Psoas muscle (tissue), 8 donors: ENCODE measurements at regions of chr4 and their contacts with region 1.

Region 1: GRCh38 chr4:184168406-184169019 is 49.2 kb downstream of the ENPP6 start:
- DNase-seq: peak; percentile 71 to 85
- ATAC-seq: peak; percentile 92 to 99 (median 94)
- H3K4me3 ChIP-seq: no peak overlapping the region
- H3K27ac ChIP-seq: no peak overlapping the region
- H3K4me1 ChIP-seq: no peaks in the 10 kb centered on the region
- H3K27me3 ChIP-seq: peaks cover 0 to 16% (median 0%) of the 10 kb centered on the region in 3 donors
- CTCF ChIP-seq: peak; percentile 94

Region 2: GRCh38 chr4:183471946-183472708 is 696.4 kb before region 1 on chr4:
- intact Hi-C with region 1: loop called in 1 of 2 experiments (anchors 10 kb)
- DNase-seq: peak; percentile 85 to 91
- ATAC-seq: peak; percentile 68 to 97 (median 85)
- H3K4me3 ChIP-seq: peak overlapping the region; percentile 26
- H3K27ac ChIP-seq: no peak overlapping the region
- H3K4me1 ChIP-seq: no peaks in the 10 kb centered on the region
- H3K27me3 ChIP-seq: no peaks in the 10 kb centered on the region
- CTCF ChIP-seq: peak; percentile 90

Region 3: DNA sequence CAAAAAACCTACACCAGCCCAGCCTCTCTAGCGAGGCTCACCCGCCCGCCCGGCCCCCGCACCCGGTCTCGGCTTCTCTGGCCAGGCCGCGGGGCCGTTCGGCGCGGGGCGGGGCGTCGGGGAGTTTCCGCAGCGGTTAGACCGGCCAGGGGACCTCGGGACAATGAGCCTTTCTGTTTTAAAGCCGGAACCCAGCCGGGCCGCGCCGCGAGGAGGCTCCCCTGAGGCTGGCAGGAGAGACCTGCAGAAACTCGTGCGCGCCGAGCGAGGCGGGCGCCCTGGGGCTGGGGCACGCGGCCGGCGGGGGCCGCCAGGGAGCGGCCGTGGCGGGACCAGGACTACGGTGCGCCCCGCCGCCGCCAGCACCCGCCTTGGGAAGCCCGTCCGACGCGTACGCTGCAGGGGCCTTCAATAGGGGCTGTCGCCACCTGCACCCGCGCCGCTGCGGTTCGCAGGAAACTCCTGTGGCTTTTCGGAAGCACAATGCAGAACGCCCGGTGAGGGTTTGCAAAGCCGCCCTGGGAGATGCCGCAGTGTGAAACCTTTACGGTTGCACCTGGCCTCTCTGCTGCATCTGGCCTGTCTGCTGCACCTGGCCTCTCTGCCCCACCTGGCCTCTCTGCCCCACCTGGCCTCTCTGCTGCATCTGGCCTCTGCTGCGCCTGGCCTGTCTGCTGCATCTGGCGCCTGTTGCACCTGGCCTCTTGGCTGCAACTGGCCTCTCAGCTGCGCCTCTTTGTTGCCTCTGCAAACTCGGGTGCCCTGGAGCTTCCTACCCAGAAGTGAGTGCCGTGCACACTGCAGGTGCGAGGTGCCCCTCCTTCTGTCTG is 445.6 kb before region 1 on chr4:
- intact Hi-C with region 1: loop called in 1 of 2 experiments (anchors 10 kb)
- DNase-seq: peak; percentile 52 to 74
- ATAC-seq: peak; percentile 54 to 84 (median 70)
- H3K4me3 ChIP-seq: peak overlapping the region; percentile 70
- H3K27ac ChIP-seq: no peak overlapping the region
- H3K4me1 ChIP-seq: no peaks in the 10 kb centered on the region
- H3K27me3 ChIP-seq: peaks cover 0 to 12% (median 0%) of the 10 kb centered on the region in 3 donors
- CTCF ChIP-seq: no peak

Region 4: GRCh38 chr4:183840311-183840710 is 328.2 kb before region 1 on chr4:
- intact Hi-C with region 1: loop called (anchors 1 to 5 kb)
- DNase-seq: peak; percentile 73 to 80
- ATAC-seq: peak; percentile 73 to 91 (median 76)
- H3K4me3 ChIP-seq: no peak overlapping the region
- H3K27ac ChIP-seq: no peak overlapping the region
- H3K4me1 ChIP-seq: no peaks in the 10 kb centered on the region
- H3K27me3 ChIP-seq: no peaks in the 10 kb centered on the region
- CTCF ChIP-seq: peak; percentile 92

Region 5: GRCh38 chr4:184193556-184194525 is 25.3 kb after region 1 on chr4:
- intact Hi-C with region 1: no loop called
- DNase-seq: no peak
- ATAC-seq: no peak
- H3K4me3 ChIP-seq: no peak overlapping the region
- H3K27ac ChIP-seq: no peak overlapping the region
- H3K4me1 ChIP-seq: no peaks in the 10 kb centered on the region
- H3K27me3 ChIP-seq: no peaks in the 10 kb centered on the region
- CTCF ChIP-seq: no peak